Lower leg skin (tissue), 4 donors: ENCODE measurements at regions of chr9 and their contacts with region 1.

Region 1: GRCh38 chr9:114405294-114406034 is 17.7 kb upstream of the AKNA start:
- DNase-seq: peak; percentile 78 to 94
- H3K4me3 ChIP-seq: no peak overlapping the region
- CTCF ChIP-seq: peak in 1 of 3 donors; percentile 70
- POLR2A ChIP-seq: no peak

Region 2: GRCh38 chr9:113837334-113837733 is 568.1 kb before region 1 on chr9:
- intact Hi-C with region 1: no loop called
- DNase-seq: no peak
- H3K4me3 ChIP-seq: no peak overlapping the region
- CTCF ChIP-seq: no peak
- POLR2A ChIP-seq: no peak

Region 3: GRCh38 chr9:114263853-114264510 is 141.5 kb before region 1 on chr9:
- intact Hi-C with region 1: no loop called
- DNase-seq: no peak
- H3K4me3 ChIP-seq: no peak overlapping the region
- CTCF ChIP-seq: no peak
- POLR2A ChIP-seq: no peak

Region 4: GRCh38 chr9:114487607-114488300 is 82.3 kb after region 1 on chr9:
- intact Hi-C with region 1: loop called (anchors 10 kb)
- DNase-seq: peak in 1 of 2 donors; percentile 45
- H3K4me3 ChIP-seq: no peak overlapping the region
- CTCF ChIP-seq: peak in 1 of 3 donors; percentile 35
- POLR2A ChIP-seq: no peak

Region 5: GRCh38 chr9:114653556-114654159 is 248.2 kb after region 1 on chr9:
- intact Hi-C with region 1: loop called (anchors 5 kb)
- DNase-seq: peak; percentile 71 to 93
- H3K4me3 ChIP-seq: no peak overlapping the region
- CTCF ChIP-seq: peak in 1 of 3 donors; percentile 75
- POLR2A ChIP-seq: no peak